ENCODE measurements at regions of chr12 and their contacts with region 1.

Region 1: DNA sequence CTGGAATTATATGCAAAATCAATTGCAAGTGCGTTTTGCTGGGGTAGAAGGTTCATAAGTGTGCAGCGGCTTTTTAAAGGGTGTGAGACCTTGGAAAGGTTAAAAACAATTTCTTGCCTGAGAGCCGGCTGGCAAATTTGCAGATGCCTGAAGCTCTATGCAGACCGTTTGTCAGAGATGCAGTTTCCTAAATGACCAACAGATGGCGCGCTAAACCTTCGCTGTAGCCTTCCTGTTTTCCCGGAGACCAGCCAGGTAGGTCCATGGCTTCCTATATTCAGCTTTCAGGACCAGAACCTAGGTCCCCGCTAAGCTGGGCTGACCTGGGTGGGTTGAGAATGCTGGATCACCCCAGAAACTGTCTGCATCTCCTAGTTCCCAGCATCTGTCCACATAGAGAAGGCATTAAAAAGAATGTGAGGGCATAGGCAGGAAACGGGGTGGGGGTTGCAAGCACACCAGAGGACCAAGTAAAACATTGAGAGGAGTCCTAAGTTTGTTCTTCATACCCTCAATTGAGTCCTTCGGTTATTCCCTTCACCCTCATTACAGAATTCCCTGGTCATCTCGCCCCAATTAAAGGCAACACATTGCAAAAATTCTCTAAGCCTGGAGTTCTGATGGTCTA is 5.7 kb upstream of the NOS1 start:
- DNase-seq: peak; percentile 12
- ATAC-seq: peak; percentile 78
- H3K4me3 ChIP-seq: no peak overlapping the region
- H3K27ac ChIP-seq: no peak overlapping the region
- H3K4me1 ChIP-seq: no peaks in the 10 kb centered on the region
- H3K27me3 ChIP-seq: peaks cover 0 to 2% of the 10 kb centered on the region in 2 experiments; a peak in 1 of 4 replicates
- CTCF ChIP-seq: peak; percentile 83 to 87 (median 86)
- EP300 ChIP-seq: no peak
- POLR2A ChIP-seq: no peak
- RAD21 ChIP-seq: peak; percentile 89

Region 2: DNA sequence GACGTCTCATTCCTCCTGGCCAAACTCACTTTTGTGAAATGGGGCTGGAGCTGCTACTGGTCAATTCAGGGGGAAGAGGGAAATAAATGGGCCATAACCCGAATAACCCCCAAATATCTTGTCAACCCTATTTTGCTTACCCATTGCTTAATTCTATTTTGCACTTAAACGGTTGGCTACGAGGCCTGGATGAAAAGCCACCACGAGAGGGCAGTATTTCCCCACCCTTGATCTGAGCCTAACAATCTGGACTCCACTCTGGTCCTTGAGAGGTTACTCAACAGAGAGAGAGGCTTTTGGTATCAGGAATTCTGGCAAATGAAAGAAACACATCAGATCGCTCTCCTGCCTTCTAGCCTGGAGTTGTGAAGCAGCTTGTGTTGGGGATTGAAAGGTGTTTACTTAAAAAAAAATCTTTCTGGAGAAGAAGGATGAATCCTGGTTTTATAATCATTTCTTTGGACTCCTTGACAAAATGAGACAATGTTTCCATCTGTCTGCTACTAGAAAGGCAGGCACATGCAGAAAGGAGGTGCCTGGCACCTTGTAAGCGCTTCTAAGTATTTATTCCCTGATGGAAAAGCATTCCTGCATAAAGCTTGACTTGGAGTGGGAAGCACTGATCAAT is 154.4 kb before region 1 on chr12:
- CTCF ChIA-PET with region 1: interaction called, 7 read pairs
- POLR2A ChIA-PET with region 1: no interaction called
- RAD21 ChIA-PET with region 1: interaction called, 4 read pairs
- SMC1A ChIA-PET with region 1: interaction called, 3 read pairs
- in situ Hi-C with region 1: no loop called
- intact Hi-C with region 1: loop called (anchors 10 kb)
- DNase-seq: no peak
- ATAC-seq: peak; percentile 88
- H3K4me3 ChIP-seq: no peak overlapping the region
- H3K27ac ChIP-seq: no peak overlapping the region
- H3K4me1 ChIP-seq: no peaks in the 10 kb centered on the region; the same call in 1 of the 2 replicates
- H3K27me3 ChIP-seq: no peaks in the 10 kb centered on the region; a peak in 1 of 4 replicates
- CTCF ChIP-seq: peak; percentile 88 to 94 (median 89)
- EP300 ChIP-seq: no peak
- POLR2A ChIP-seq: no peak
- RAD21 ChIP-seq: peak; percentile 84

Region 3: DNA sequence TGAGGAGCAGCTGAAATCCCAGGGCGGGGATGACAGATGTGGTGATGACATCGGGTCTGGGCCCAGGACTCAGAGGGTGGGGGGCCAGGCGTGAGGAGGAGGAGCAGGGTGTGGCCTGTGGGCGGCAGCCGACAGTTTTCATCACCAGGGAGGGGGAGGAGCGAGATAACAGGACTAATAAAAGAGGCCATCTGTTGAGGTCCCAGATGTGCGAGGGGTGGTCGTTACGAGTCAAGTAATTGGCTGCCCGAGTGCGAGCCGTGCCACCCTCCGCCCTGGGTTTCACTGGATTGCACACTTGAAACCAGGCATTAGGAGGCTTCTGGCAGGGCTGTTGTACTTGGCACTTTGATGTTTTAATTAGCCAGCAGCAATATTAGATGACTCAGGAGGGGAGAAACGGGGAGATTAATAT is 72.9 kb before region 1 on chr12:
- CTCF ChIA-PET with region 1: no interaction called
- POLR2A ChIA-PET with region 1: no interaction called
- RAD21 ChIA-PET with region 1: no interaction called
- SMC1A ChIA-PET with region 1: no interaction called
- in situ Hi-C with region 1: no loop called
- intact Hi-C with region 1: no loop called
- DNase-seq: no peak
- ATAC-seq: no peak
- H3K4me3 ChIP-seq: no peak overlapping the region
- H3K27ac ChIP-seq: no peak overlapping the region
- H3K4me1 ChIP-seq: no peaks in the 10 kb centered on the region
- H3K27me3 ChIP-seq: peaks cover 0 to 4% of the 10 kb centered on the region in 2 experiments
- CTCF ChIP-seq: no peak
- EP300 ChIP-seq: no peak
- POLR2A ChIP-seq: no peak
- RAD21 ChIP-seq: no peak

Region 4: DNA sequence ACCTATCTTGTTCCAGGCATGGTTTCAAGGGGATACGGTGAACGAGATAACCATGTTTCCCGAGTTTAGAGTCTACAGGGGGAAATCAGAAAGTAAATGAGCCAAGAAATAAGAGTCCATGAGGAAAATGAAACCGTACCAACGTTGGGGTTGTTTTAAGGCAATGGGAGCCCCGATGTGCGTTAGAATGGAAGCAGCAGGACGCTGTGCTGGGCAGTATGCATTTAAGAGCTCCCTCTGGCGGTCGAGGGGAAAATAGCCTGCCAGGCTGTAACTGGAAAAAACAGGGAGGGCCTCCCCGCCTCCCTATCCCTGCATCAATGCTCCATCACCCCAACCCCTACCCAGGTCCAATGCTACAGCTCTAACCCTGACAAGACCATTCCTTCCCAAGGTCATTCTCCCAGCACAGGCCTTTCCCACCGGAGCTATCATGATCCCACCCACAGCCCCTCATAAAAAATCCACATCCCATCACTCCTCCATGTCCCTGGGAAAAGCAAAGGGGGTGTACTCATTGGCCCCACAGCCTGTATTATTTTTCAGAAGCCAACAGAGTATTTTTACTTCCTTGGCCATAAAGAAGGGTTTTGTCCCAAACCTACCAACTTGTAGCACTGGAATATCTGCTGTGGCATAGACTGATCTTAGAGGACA is 220.6 kb after region 1 on chr12:
- CTCF ChIA-PET with region 1: interaction called, 109 read pairs
- POLR2A ChIA-PET with region 1: no interaction called
- RAD21 ChIA-PET with region 1: interaction called, 28 read pairs
- SMC1A ChIA-PET with region 1: interaction called, 37 read pairs
- in situ Hi-C with region 1: loop called (anchors 5 kb)
- intact Hi-C with region 1: loop called (anchors 1 kb)
- DNase-seq: no peak
- ATAC-seq: peak; percentile 82
- H3K4me3 ChIP-seq: no peak overlapping the region
- H3K27ac ChIP-seq: no peak overlapping the region
- H3K4me1 ChIP-seq: no peaks in the 10 kb centered on the region
- H3K27me3 ChIP-seq: peaks cover 0 to 2% of the 10 kb centered on the region in 2 experiments; a peak in 2 of 4 replicates
- CTCF ChIP-seq: peak; percentile 84 to 91 (median 86)
- EP300 ChIP-seq: no peak
- POLR2A ChIP-seq: no peak
- RAD21 ChIP-seq: peak; percentile 61

Region 5: DNA sequence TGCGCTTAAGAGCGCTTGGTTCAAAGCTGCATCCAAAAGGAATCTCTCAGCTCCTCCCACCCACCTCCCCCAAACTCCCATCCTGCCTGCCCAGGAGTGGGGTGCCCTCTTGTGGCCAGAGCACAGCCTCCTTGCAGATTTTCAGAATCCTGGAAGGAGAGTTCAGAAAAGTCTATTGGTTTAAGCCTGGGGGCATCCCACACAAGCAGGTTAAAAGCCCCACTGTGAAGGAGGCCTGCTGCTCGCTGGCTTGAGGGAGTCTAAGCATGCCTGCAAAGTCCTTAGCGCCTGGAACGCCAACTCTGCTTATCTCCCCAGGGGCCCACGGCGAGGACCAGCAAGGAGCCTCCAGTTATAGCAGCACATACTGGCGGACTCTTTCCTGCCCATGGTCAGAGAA is 304.6 kb after region 1 on chr12:
- CTCF ChIA-PET with region 1: interaction called, 4 read pairs
- POLR2A ChIA-PET with region 1: no interaction called
- RAD21 ChIA-PET with region 1: interaction called, 5 read pairs
- SMC1A ChIA-PET with region 1: no interaction called
- in situ Hi-C with region 1: no loop called
- intact Hi-C with region 1: loop called (anchors 2 kb)
- DNase-seq: no peak
- ATAC-seq: no peak
- H3K4me3 ChIP-seq: no peak overlapping the region
- H3K27ac ChIP-seq: no peak overlapping the region
- H3K4me1 ChIP-seq: no peaks in the 10 kb centered on the region
- H3K27me3 ChIP-seq: no peaks in the 10 kb centered on the region; a peak in 1 of 4 replicates
- CTCF ChIP-seq: peak; percentile 45 to 59 (median 59)
- EP300 ChIP-seq: no peak
- POLR2A ChIP-seq: no peak
- RAD21 ChIP-seq: peak; percentile 52

Region 6: GRCh38 chr12:117850048-117850447 is 482.9 kb after region 1 on chr12:
- CTCF ChIA-PET with region 1: interaction called, 50 read pairs
- POLR2A ChIA-PET with region 1: no interaction called
- RAD21 ChIA-PET with region 1: interaction called, 11 read pairs
- SMC1A ChIA-PET with region 1: interaction called, 26 read pairs
- in situ Hi-C with region 1: no loop called
- intact Hi-C with region 1: loop called (anchors 5 kb)
- DNase-seq: no peak
- ATAC-seq: peak; percentile 65
- H3K4me3 ChIP-seq: no peak overlapping the region
- H3K27ac ChIP-seq: no peak overlapping the region
- H3K4me1 ChIP-seq: peaks cover 6% of the 10 kb centered on the region; the same call in 1 of the 2 replicates
- H3K27me3 ChIP-seq: no peaks in the 10 kb centered on the region
- CTCF ChIP-seq: peak; percentile 67 to 94 (median 82)
- EP300 ChIP-seq: no peak
- POLR2A ChIP-seq: no peak
- RAD21 ChIP-seq: peak; percentile 46